T-cell (primary cell): ENCODE measurements at regions of chr15 and their contacts with region 1.

Region 1: GRCh38 chr15:45198337-45199135 is 10.8 kb upstream of the SHF start:
- DNase-seq: peak; percentile 83 to 99 (median 94)
- ATAC-seq: peak; percentile 67 to 75 (median 72)
- H3K4me3 ChIP-seq: peak overlapping the region; percentile 85 to 92
- H3K4me3 Mint-ChIP-seq: no peak overlapping the region
- H3K27ac ChIP-seq: peak overlapping the region; percentile 96
- H3K27ac Mint-ChIP-seq: no peak overlapping the region
- H3K4me1 ChIP-seq: peaks cover 2 to 31% of the 10 kb centered on the region in 2 experiments
- H3K4me1 Mint-ChIP-seq: peaks cover 0 to 17% (median 15%) of the 10 kb centered on the region in 3 donors
- H3K27me3 ChIP-seq: peaks cover 0 to 5% of the 10 kb centered on the region in 2 experiments
- H3K27me3 Mint-ChIP-seq: no peaks in the 10 kb centered on the region

Region 2: DNA sequence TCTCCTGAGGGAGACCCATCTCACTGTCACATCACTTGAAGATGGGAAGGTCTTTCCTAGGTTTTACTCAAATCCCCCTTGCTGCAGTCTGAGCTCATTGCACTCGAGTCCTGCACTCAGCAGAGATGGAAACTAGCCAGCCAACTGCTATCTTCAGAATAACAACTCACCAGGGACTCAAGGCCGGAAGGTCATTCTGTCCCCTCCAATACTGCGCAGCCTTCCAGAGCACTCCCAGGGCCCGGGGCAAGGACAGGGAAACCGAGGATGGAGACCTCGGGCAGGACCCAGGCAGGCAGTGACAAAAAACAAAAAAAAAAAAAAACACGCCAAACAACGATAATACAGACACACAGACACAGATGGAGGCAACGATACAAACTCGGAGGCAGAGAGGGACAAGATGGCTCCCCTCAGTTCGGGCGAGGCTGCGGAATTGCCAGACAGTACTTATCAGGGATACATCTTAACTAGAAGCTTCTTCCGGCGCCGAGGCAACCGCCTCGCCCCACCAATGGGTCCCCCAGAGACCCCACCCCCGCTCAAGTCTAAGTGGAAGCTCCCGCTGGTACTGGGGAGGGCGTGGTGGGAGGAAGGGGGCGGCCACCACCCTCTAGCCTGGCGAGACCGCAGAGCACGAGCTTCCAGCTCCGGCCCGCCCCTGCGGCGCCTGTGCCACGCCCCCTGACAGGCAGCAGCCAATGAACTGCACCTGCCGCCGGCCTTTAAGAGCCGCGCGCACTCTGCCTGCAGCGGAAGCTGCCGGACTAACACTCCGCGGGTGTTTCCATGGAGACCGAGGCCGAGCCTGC is 1688.1 kb before region 1 on chr15:
- CTCF ChIA-PET with region 1: interaction called in 1 of 2 experiments, 7 read pairs
- POLR2A ChIA-PET with region 1: interaction called in 1 of 2 experiments, 10 read pairs
- DNase-seq: peak; percentile 87 to 97 (median 93)
- ATAC-seq: peak; percentile 90 to 95 (median 94)
- H3K4me3 ChIP-seq: peak overlapping the region; percentile 64 to 79
- H3K4me3 Mint-ChIP-seq: peak overlapping the region; percentile 84 to 95 (median 94)
- H3K27ac ChIP-seq: peak overlapping the region; percentile 55
- H3K27ac Mint-ChIP-seq: peak overlapping the region; percentile 92 to 96
- H3K4me1 ChIP-seq: peaks cover 12 to 28% of the 10 kb centered on the region in 2 experiments
- H3K4me1 Mint-ChIP-seq: peaks cover 35 to 50% (median 35%) of the 10 kb centered on the region in 3 donors
- H3K27me3 ChIP-seq: no peaks in the 10 kb centered on the region
- H3K27me3 Mint-ChIP-seq: peaks cover 0 to under 1% of the 10 kb centered on the region in 2 donors

Region 3: DNA sequence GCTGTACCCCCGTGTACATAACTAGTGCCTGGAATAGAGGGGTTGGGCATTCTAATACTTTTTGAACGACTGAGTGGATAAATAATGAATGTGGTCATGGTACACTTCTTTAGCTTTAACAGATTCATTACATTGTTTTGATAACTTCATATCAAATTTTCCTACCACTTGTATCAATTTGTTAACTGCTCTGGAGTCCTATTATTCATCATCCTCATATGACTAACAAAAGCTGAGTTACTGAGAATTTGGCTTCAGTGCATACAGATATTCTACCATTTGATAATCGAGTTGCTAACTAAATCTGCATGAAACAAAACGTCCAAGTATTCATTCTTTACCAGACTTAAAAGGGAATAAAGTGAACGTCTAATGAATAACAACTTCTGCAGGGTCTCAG is 1035.2 kb before region 1 on chr15:
- CTCF ChIA-PET with region 1: no interaction called
- POLR2A ChIA-PET with region 1: no interaction called
- DNase-seq: no peak
- ATAC-seq: no peak
- H3K4me3 ChIP-seq: no peak overlapping the region
- H3K4me3 Mint-ChIP-seq: no peak overlapping the region
- H3K27ac ChIP-seq: no peak overlapping the region
- H3K27ac Mint-ChIP-seq: no peak overlapping the region
- H3K4me1 ChIP-seq: no peaks in the 10 kb centered on the region
- H3K4me1 Mint-ChIP-seq: no peaks in the 10 kb centered on the region
- H3K27me3 ChIP-seq: peaks cover 4 to 9% of the 10 kb centered on the region in 2 experiments
- H3K27me3 Mint-ChIP-seq: peaks cover 19% of the 10 kb centered on the region in 2 donors

Region 4: GRCh38 chr15:44231842-44232241 is 966.7 kb before region 1 on chr15:
- CTCF ChIA-PET with region 1: no interaction called
- POLR2A ChIA-PET with region 1: no interaction called
- DNase-seq: no peak
- ATAC-seq: no peak
- H3K4me3 ChIP-seq: no peak overlapping the region
- H3K4me3 Mint-ChIP-seq: no peak overlapping the region
- H3K27ac ChIP-seq: no peak overlapping the region
- H3K27ac Mint-ChIP-seq: no peak overlapping the region
- H3K4me1 ChIP-seq: no peaks in the 10 kb centered on the region
- H3K4me1 Mint-ChIP-seq: no peaks in the 10 kb centered on the region
- H3K27me3 ChIP-seq: peaks cover 0 to 4% of the 10 kb centered on the region in 2 experiments
- H3K27me3 Mint-ChIP-seq: peaks cover 8 to 13% of the 10 kb centered on the region in 2 donors

Region 5: GRCh38 chr15:45187894-45188830 is 10.4 kb before region 1 on chr15 and contains the start of gene SHF:
- CTCF ChIA-PET with region 1: interaction called in 1 of 2 experiments, 9 read pairs
- POLR2A ChIA-PET with region 1: interaction called, 4 to 10 read pairs
- DNase-seq: peak in 33 of 35 experiments; percentile 39 to 80 (median 57)
- ATAC-seq: peak; percentile 75 to 80 (median 78)
- H3K4me3 ChIP-seq: peak within 1 kb of the TSS; percentile 74 to 97
- H3K4me3 Mint-ChIP-seq: peak within 1 kb of the TSS; percentile 86 to 92 (median 86)
- H3K27ac ChIP-seq: peak within 1 kb of the TSS; percentile 44
- H3K27ac Mint-ChIP-seq: peak within 1 kb of the TSS; percentile 76 to 90
- H3K4me1 ChIP-seq: peaks cover 2 to 20% of the 10 kb centered on the region in 2 experiments
- H3K4me1 Mint-ChIP-seq: peaks cover 14 to 25% (median 23%) of the 10 kb centered on the region in 3 donors
- H3K27me3 ChIP-seq: peaks cover 0 to 9% of the 10 kb centered on the region in 2 experiments
- H3K27me3 Mint-ChIP-seq: no peaks in the 10 kb centered on the region
- total RNA-seq, gene SHF: 5.1 to 6.5 (median 5.6) TPM

Region 6: DNA sequence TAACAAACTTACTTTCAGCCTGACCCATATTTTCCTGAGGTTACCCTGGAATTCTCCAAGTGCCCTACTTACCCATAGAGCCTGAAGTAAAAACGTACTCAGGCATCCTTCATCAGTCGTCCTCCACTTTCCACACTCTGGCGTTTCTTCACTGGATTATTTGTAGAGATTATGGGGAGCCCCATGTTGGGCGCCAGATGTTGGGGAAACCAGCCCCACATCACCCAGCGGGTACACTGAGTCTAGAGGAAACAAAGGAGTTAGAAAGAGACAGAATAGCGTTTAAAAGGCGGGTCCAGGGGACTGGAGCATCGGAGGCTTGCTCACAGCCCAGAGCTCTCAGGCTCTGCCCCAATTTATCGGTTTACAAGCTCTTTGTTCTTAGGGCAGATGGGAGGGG is 43.8 kb after region 1 on chr15:
- CTCF ChIA-PET with region 1: no interaction called
- POLR2A ChIA-PET with region 1: no interaction called
- DNase-seq: peak in 1 of 35 experiments; percentile 10
- ATAC-seq: no peak
- H3K4me3 ChIP-seq: no peak overlapping the region
- H3K4me3 Mint-ChIP-seq: no peak overlapping the region
- H3K27ac ChIP-seq: no peak overlapping the region
- H3K27ac Mint-ChIP-seq: no peak overlapping the region
- H3K4me1 ChIP-seq: no peaks in the 10 kb centered on the region
- H3K4me1 Mint-ChIP-seq: no peaks in the 10 kb centered on the region
- H3K27me3 ChIP-seq: peaks cover 0 to 3% of the 10 kb centered on the region in 2 experiments
- H3K27me3 Mint-ChIP-seq: peaks cover 0 to 14% of the 10 kb centered on the region in 2 donors